Mucosa of descending colon (tissue), 3 donors: ENCODE measurements at regions of chr12 and their contacts with region 1.

Region 1: GRCh38 chr12:111029732-111030131 is 109.4 kb upstream of the MYL2 start:
- DNase-seq: no peak
- ATAC-seq: no peak
- H3K4me3 ChIP-seq: no peak overlapping the region
- H3K4me1 ChIP-seq: no peaks in the 10 kb centered on the region
- CTCF ChIP-seq: no peak

Region 2: GRCh38 chr12:110947729-110948448 is 81.8 kb before region 1 on chr12:
- intact Hi-C with region 1: no loop called
- DNase-seq: no peak
- ATAC-seq: no peak
- H3K4me3 ChIP-seq: no peak overlapping the region
- H3K4me1 ChIP-seq: no peaks in the 10 kb centered on the region
- CTCF ChIP-seq: no peak

Region 3: GRCh38 chr12:111304642-111305071 is 274.9 kb after region 1 on chr12:
- intact Hi-C with region 1: loop called in 1 of 2 experiments (anchors 5 kb)
- DNase-seq: no peak
- ATAC-seq: no peak
- H3K4me3 ChIP-seq: no peak overlapping the region
- H3K4me1 ChIP-seq: no peaks in the 10 kb centered on the region
- CTCF ChIP-seq: no peak